ENCODE measurements at regions of chr20 and their contacts with region 1.

Region 1: DNA sequence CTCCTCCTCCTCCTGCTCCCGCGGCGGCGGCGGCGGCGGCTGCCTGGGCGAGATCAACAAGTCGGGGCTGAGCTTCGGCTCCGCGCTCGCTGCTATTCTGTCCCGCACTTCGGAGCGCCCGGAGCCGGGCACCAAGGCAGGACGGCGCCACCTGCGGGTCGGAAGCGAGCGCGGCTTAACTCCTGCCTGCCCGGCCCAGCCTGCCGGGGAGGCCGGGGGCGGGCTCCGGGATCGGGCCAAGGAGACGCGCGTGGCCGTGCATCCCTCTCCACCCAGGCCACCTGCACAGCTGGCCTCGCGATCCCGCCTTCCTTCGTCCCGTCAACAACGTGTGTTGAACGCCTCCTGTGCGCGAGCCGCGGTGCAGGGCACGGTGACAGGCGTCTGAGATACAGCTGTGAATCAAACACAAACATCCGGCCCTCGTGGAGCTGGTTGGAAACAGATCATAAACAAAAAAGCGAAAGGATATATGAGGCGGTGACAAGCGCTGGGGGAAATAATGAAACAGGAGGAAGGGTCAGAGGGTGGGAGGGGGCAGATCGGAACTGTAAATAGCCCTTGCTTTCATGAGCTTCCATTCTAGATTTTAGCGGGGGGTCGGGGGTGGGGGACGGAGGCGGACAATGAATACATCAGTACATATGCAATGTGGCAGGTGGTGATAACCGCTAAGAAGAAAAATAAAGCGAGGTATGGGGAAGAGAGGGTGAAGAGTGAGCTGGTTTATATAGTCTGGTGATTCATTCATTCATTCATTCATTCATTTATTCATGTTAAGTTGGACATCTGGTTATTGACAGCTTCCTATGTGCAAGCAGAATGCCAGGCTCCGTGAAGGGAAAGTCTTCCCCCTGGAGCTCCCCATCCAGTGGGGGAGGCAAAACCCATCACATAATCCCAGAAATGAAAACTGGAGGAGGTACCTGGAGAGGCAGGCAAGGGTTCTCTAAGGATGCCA is 2.0 kb upstream of the KCNB1 start:
- DNase-seq: peak; percentile 70 to 91 (median 77)
- H3K4me3 ChIP-seq: peak overlapping the region in 1 of 4 donors; percentile 53
- H3K27ac ChIP-seq: no peak overlapping the region
- H3K4me1 ChIP-seq: peaks cover 8 to 14% of the 10 kb centered on the region in 2 donors
- H3K27me3 ChIP-seq: peaks cover 11% of the 10 kb centered on the region
- CTCF ChIP-seq: peak; percentile 41 to 77 (median 61)
- POLR2A ChIP-seq: no peak

Region 2: DNA sequence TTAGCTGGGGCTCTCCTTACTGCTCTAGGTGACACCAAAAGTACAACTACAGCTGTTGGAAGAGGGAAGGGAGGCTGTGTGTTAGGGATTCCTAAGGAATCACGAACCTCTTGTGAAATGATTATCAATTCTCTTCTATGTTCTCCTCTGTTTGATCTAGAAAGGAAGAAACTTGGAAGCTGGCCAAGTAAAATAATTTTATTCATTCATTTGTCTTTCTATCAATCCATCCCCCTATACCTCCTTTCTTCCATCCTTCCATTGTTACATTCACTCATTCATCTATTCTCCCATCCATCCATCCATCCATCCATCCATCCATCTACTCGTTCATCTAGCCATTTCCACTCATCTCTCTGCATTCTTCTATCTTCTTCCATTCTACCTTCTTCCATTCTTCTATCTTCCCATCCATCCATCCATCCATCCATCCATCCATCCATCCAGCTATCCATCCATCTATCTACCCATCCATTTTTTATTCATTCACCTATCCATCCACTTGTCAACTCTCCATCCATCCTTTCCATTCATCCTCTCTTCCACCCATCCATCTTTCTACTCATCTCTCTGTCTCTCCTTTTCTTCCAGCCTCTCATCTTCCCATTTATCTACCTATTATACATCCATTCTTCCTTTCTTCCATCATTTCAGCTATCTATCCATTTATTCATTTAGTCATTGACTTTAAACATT is 153.8 kb before region 1 on chr20:
- intact Hi-C with region 1: loop called (anchors 5 kb)
- DNase-seq: no peak
- H3K4me3 ChIP-seq: no peak overlapping the region
- H3K27ac ChIP-seq: no peak overlapping the region
- H3K4me1 ChIP-seq: no peaks in the 10 kb centered on the region
- H3K27me3 ChIP-seq: peaks cover 4% of the 10 kb centered on the region
- CTCF ChIP-seq: no peak
- POLR2A ChIP-seq: no peak

Region 3: GRCh38 chr20:49338061-49338460 is 146.4 kb before region 1 on chr20:
- intact Hi-C with region 1: loop called (anchors 5 kb)
- DNase-seq: no peak
- H3K4me3 ChIP-seq: no peak overlapping the region
- H3K27ac ChIP-seq: no peak overlapping the region
- H3K4me1 ChIP-seq: no peaks in the 10 kb centered on the region
- H3K27me3 ChIP-seq: peaks cover 16% of the 10 kb centered on the region
- CTCF ChIP-seq: no peak
- POLR2A ChIP-seq: no peak

Region 4: DNA sequence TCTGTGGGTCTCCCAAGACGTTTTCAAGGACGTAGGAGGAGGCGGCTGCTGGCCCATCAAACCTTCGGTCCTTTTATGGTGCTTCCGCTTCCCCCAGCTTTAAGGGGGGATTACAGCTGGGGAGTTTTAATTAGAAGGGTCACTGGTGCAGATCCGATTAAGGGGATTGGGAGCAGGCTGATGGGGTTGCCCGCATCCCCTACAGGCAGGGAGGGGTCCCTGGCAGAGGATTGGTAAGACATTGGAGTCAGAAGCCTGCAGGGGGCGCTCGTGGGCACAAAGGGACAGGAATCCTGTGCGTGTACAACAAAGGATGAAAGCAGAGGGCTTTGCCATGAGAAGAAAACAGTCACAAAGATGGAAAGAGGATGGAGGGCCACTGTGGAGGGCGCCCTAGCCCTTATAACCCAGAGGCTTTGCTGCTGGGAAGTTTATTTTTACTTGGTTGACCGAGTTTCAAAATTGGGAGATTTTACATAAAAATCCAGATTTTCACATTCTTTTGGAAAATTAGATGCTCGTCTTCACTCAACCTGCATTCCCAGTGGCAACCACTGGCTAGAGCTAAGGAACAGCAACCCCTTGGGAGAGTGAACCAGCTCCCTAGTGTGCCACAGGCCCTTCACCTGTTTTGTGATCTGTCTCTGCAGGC is 99.9 kb before region 1 on chr20:
- intact Hi-C with region 1: loop called in 1 of 2 experiments (anchors 10 kb)
- DNase-seq: peak; percentile 59 to 87 (median 67)
- H3K4me3 ChIP-seq: no peak overlapping the region
- H3K27ac ChIP-seq: no peak overlapping the region
- H3K4me1 ChIP-seq: no peaks in the 10 kb centered on the region
- H3K27me3 ChIP-seq: no peaks in the 10 kb centered on the region
- CTCF ChIP-seq: peak; percentile 26 to 64 (median 62)
- POLR2A ChIP-seq: no peak

Measured in adrenal gland (tissue), 19 donors.